ENCODE measurements at regions of chr12 and their contacts with region 1.

Region 1: GRCh38 chr12:88501972-88502938 is 78.0 kb downstream of the KITLG start:
- DNase-seq: no peak
- H3K4me3 ChIP-seq: no peak overlapping the region
- H3K27ac ChIP-seq: no peak overlapping the region
- H3K4me1 ChIP-seq: no peaks in the 10 kb centered on the region
- H3K27me3 ChIP-seq: no peaks in the 10 kb centered on the region
- CTCF ChIP-seq: no peak
- POLR2A ChIP-seq: no peak

Region 2: DNA sequence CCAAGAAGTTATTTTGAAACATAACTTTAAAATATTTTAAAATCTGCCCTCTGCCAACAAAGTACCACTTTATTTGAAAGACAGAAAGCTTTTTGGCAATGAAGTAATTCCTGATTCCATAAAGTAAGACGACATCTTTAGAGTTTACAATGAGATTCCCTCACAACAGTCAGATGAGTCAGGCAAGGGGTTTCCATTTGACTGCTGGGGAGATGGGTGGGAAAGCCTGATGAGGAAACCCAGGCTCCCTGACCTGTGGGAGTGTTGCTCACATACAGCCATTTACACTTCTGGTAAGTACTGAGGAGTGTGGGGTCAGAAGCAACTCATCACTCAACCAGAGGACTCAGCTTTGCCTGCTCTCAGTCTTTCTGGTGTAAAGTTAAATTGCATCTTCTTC is 67.8 kb after region 1 on chr12:
- intact Hi-C with region 1: loop called (anchors 2 kb)
- DNase-seq: no peak
- H3K4me3 ChIP-seq: no peak overlapping the region
- H3K27ac ChIP-seq: no peak overlapping the region
- H3K4me1 ChIP-seq: no peaks in the 10 kb centered on the region
- H3K27me3 ChIP-seq: no peaks in the 10 kb centered on the region
- CTCF ChIP-seq: no peak
- POLR2A ChIP-seq: no peak

Measured in breast epithelium (tissue), 4 donors.